ENCODE measurements at regions of chr11 and their contacts with region 1.

Region 1: GRCh38 chr11:63023841-63024648 is 8.4 kb upstream of the SLC22A8 start:
- DNase-seq: peak; percentile 88
- H3K4me3 Mint-ChIP-seq: no peak overlapping the region
- H3K27ac Mint-ChIP-seq: peak overlapping the region; percentile 0
- H3K4me1 Mint-ChIP-seq: no peaks in the 10 kb centered on the region
- H3K27me3 Mint-ChIP-seq: peaks cover 27% of the 10 kb centered on the region

Region 2: DNA sequence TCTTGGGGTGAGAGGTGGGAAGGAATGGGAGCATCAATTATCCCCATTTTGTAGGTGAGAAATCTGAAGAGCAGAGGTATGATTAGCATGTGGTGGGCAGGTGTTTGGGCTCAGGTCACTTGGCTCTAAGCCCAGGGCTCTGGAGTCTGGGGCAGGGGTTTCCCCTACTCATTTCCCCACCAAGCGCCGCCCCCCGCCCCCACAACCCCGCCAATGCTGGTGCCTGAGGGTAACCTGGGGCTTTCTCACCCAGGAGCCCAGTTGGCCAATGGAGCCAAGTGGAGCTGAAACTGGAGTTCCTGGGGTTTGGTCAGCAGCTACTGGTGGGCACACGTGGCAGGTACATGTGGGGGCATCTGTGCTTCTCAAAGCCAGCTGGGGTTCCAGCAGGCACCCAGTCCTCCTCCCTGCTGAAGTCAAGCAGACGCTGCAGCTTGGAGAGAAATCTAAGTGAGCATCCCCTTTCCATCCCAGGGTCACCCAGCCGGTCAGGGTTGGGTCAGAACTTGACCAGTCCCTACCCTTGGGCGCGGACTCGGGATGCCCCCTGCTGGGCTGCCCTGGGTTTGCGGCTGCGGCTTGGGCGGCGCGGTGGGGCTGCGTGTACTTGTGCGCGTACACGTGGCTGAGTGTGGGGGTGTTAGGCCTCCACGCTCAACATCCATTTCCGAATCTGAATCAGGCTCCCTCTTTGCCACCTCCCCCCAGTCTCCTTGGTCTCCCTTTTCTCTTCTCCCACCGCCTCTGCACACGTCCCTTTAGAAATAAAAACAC is 101.2 kb before region 1 on chr11:
- CTCF ChIA-PET with region 1: interaction called, 20 read pairs
- DNase-seq: peak; percentile 29
- H3K4me3 Mint-ChIP-seq: no peak overlapping the region
- H3K27ac Mint-ChIP-seq: no peak overlapping the region
- H3K4me1 Mint-ChIP-seq: peaks cover 23% of the 10 kb centered on the region
- H3K27me3 Mint-ChIP-seq: peaks cover 100% of the 10 kb centered on the region

Region 3: GRCh38 chr11:63012430-63012829 is 11.6 kb before region 1 on chr11:
- CTCF ChIA-PET with region 1: interaction called, 55 read pairs
- DNase-seq: no peak
- H3K4me3 Mint-ChIP-seq: no peak overlapping the region
- H3K27ac Mint-ChIP-seq: no peak overlapping the region
- H3K4me1 Mint-ChIP-seq: no peaks in the 10 kb centered on the region
- H3K27me3 Mint-ChIP-seq: peaks cover 16% of the 10 kb centered on the region

Region 4: DNA sequence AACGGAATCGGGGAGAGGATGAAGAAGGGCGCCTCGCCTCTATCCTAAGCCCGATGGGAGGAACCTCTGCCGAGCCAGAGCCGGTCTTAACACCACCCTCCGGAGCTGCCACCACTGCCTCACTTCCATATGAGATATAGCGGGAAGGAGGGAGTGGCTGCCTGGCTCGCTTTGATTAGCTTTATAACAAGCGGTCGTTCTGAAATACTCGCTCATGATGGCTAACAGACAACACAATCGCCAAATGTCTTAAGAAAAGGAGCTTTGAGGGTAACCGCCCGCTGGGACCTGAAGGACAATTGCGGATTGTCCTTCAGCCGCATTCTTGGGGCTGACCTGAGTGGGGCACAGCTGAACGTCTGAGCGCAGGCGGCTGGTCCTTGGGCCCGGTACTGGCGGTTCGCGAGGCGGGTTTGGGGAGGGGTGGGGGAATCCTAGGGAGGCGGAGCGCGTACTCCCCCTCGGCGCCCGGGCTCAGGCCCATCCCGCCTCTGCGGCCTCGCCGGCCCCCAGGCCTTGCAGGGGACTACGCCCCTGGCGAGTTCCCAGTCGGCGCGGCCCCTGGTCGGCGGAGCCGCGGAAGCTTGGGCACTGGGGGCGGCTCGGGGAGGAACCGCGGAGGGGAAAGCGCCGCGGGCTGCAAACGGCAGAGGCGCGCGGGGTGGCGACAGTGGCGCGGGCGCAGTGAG is 466.6 kb after region 1 on chr11 and contains the start of gene PLAAT5:
- CTCF ChIA-PET with region 1: no interaction called
- DNase-seq: no peak
- H3K4me3 Mint-ChIP-seq: peak within 1 kb of the TSS; percentile 65
- H3K27ac Mint-ChIP-seq: no peak within 1 kb of the TSS
- H3K4me1 Mint-ChIP-seq: peaks cover 13% of the 10 kb centered on the region
- H3K27me3 Mint-ChIP-seq: peaks cover 58% of the 10 kb centered on the region